ENCODE measurements at regions of chr2 and their contacts with region 1.

Region 1: GRCh38 chr2:85302121-85302520 is 25.7 kb downstream of the TGOLN2 start:
- DNase-seq: no peak
- ATAC-seq: no peak
- H3K4me3 ChIP-seq: no peak overlapping the region
- H3K4me3 Mint-ChIP-seq: no peak overlapping the region
- H3K27ac ChIP-seq: no peak overlapping the region
- H3K27ac Mint-ChIP-seq: no peak overlapping the region
- H3K4me1 ChIP-seq: no peaks in the 10 kb centered on the region
- H3K4me1 Mint-ChIP-seq: peaks cover 7 to 22% (median 14%) of the 10 kb centered on the region in 7 donors
- H3K27me3 ChIP-seq: no peaks in the 10 kb centered on the region
- H3K27me3 Mint-ChIP-seq: peaks cover 0 to 23% (median 0%) of the 10 kb centered on the region in 5 donors

Region 2: DNA sequence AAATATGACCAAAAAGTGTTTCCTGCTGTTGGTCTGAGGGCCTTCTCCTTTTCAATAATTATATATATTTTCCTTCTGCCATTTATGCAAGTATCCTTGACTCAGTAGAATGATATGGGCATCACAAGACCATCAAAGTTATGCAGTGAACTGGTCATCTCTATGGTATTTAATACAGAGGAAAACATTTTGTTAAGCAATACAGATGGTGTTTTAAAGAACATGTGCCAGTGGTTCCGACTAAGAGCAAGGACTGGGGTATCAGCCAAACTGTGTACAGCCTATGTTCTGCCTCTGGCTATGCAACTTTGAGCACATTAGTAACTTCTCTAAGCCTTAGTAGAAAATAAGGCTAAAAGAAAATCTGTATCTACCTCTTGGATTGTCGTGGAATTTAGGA is 600.2 kb before region 1 on chr2:
- CTCF ChIA-PET with region 1: no interaction called
- POLR2A ChIA-PET with region 1: no interaction called
- intact Hi-C with region 1: no loop called
- DNase-seq: no peak
- ATAC-seq: no peak
- H3K4me3 ChIP-seq: no peak overlapping the region
- H3K4me3 Mint-ChIP-seq: no peak overlapping the region
- H3K27ac ChIP-seq: no peak overlapping the region
- H3K27ac Mint-ChIP-seq: no peak overlapping the region
- H3K4me1 ChIP-seq: peaks cover 0 to 14% of the 10 kb centered on the region in 2 donors
- H3K4me1 Mint-ChIP-seq: peaks cover 3 to 68% (median 50%) of the 10 kb centered on the region in 7 donors
- H3K27me3 ChIP-seq: no peaks in the 10 kb centered on the region
- H3K27me3 Mint-ChIP-seq: peaks cover 0 to 3% (median 0%) of the 10 kb centered on the region in 5 donors

Region 3: GRCh38 chr2:85017411-85018048 is 284.6 kb before region 1 on chr2:
- CTCF ChIA-PET with region 1: interaction called, 4 read pairs
- POLR2A ChIA-PET with region 1: interaction called, 3 read pairs
- intact Hi-C with region 1: loop called in 1 of 2 experiments (anchors 1 kb)
- DNase-seq: peak in 4 of 9 donors; percentile 17 to 30 (median 24)
- ATAC-seq: no peak
- H3K4me3 ChIP-seq: no peak overlapping the region
- H3K4me3 Mint-ChIP-seq: peak overlapping the region in 4 of 10 donors; percentile 5 to 39 (median 32)
- H3K27ac ChIP-seq: no peak overlapping the region
- H3K27ac Mint-ChIP-seq: peak overlapping the region in 8 of 9 donors; percentile 8 to 67 (median 38)
- H3K4me1 ChIP-seq: peaks cover 2 to 15% of the 10 kb centered on the region in 2 donors
- H3K4me1 Mint-ChIP-seq: peaks cover 41 to 78% (median 66%) of the 10 kb centered on the region in 7 donors
- H3K27me3 ChIP-seq: no peaks in the 10 kb centered on the region
- H3K27me3 Mint-ChIP-seq: no peaks in the 10 kb centered on the region

Region 4: GRCh38 chr2:85181134-85181631 is 120.9 kb before region 1 on chr2:
- CTCF ChIA-PET with region 1: no interaction called
- POLR2A ChIA-PET with region 1: no interaction called
- intact Hi-C with region 1: loop called in 1 of 2 experiments (anchors 1 kb)
- DNase-seq: no peak
- ATAC-seq: no peak
- H3K4me3 ChIP-seq: no peak overlapping the region
- H3K4me3 Mint-ChIP-seq: no peak overlapping the region
- H3K27ac ChIP-seq: no peak overlapping the region
- H3K27ac Mint-ChIP-seq: no peak overlapping the region
- H3K4me1 ChIP-seq: no peaks in the 10 kb centered on the region
- H3K4me1 Mint-ChIP-seq: peaks cover 0 to 10% (median 0%) of the 10 kb centered on the region in 7 donors
- H3K27me3 ChIP-seq: no peaks in the 10 kb centered on the region
- H3K27me3 Mint-ChIP-seq: peaks cover 0 to 10% (median 0%) of the 10 kb centered on the region in 5 donors

Region 5: GRCh38 chr2:85272357-85272756 is 29.8 kb before region 1 on chr2:
- CTCF ChIA-PET with region 1: interaction called, 44 read pairs
- POLR2A ChIA-PET with region 1: no interaction called
- intact Hi-C with region 1: no loop called
- DNase-seq: no peak
- ATAC-seq: no peak
- H3K4me3 ChIP-seq: no peak overlapping the region
- H3K4me3 Mint-ChIP-seq: no peak overlapping the region
- H3K27ac ChIP-seq: no peak overlapping the region
- H3K27ac Mint-ChIP-seq: no peak overlapping the region
- H3K4me1 ChIP-seq: no peaks in the 10 kb centered on the region
- H3K4me1 Mint-ChIP-seq: no peaks in the 10 kb centered on the region
- H3K27me3 ChIP-seq: no peaks in the 10 kb centered on the region
- H3K27me3 Mint-ChIP-seq: peaks cover 0 to 27% (median 6%) of the 10 kb centered on the region in 5 donors

Region 6: DNA sequence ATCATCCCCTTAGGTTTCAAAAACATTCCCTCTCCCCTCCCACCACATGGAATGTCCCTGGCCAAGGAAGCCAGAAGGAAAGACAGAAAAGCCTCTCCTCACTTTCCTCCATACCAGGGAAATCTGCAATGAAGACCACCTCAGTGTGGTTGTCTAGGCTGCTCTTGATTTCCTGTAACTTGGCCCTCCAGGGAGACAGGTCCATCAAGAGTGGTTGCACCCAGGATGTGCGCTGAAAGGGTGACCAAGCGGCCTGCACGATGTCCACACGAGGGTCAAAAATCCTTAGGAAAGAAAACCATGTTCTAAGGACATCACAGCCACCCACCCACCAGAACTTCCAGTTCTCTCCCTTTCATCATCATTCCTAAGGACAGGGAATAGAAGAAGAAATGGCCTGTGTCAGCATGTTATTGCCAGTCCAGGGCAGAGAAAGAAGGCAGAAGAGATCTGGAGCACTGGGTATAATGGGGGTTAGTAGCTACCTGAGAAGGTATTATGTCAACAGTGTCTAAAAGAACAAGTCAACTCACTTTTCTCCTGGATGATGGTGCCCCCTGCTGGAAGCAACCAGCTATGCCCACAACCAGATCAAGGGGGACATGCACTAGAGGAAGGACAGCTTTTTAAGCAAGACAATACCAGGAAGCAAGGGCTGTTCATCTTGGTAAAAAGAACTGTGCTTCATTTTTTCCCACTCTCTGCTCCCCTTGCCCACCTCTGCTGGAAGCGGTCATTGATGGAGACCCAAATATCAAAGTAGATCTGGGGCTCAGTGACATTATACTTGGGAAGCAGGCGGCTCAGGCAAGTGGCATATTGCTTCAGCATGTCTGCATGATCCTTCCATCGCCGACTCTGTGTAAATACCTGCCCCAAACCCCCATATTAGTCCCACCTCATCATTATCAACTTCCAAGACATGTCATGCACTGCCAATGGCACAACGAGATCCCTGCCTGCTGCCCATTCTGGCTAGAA is 249.9 kb after region 1 on chr2:
- CTCF ChIA-PET with region 1: interaction called, 8 read pairs
- POLR2A ChIA-PET with region 1: interaction called, 3 read pairs
- intact Hi-C with region 1: loop called (anchors 1 to 5 kb)
- DNase-seq: peak; percentile 70 to 92 (median 88)
- ATAC-seq: peak; percentile 97
- H3K4me3 ChIP-seq: no peak overlapping the region
- H3K4me3 Mint-ChIP-seq: no peak overlapping the region
- H3K27ac ChIP-seq: no peak overlapping the region
- H3K27ac Mint-ChIP-seq: peak overlapping the region in 5 of 9 donors; percentile 12 to 62 (median 38)
- H3K4me1 ChIP-seq: no peaks in the 10 kb centered on the region
- H3K4me1 Mint-ChIP-seq: peaks cover 0 to 10% (median 6%) of the 10 kb centered on the region in 7 donors
- H3K27me3 ChIP-seq: no peaks in the 10 kb centered on the region
- H3K27me3 Mint-ChIP-seq: no peaks in the 10 kb centered on the region

Measured in naive thymus-derived CD4-positive, alpha-beta T cell (primary cell).